HCT116 (cell line): ENCODE measurements at regions of chr2 and their contacts with region 1.

Region 1: DNA sequence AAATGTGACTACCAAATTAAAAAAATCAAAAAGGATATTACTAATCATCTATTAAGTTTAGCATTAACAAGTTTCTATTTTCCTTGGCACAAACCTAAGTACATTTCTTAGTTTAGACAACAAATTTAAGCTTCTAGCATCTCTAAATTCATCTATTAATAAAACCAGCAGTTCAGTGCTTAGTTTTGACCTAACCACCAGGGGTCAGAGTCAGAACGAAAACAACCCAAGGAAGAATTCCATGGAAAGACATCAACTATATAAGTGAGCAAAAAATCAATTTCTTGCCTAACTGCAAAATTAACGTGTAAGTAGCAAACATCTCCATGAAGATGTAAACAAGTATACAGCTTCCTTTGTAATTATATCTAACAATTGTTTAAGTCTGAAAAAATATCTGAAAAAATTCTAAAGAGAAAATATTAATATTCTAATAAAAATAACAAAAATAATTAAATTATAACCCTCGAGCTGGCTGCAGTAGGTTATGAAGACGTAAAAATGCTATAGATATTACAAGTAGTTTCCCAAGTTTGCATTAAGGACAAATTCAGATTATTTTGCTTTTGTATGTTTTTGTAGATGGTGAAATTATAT is 83.7 kb downstream of the CERKL start:
- DNase-seq: peak; percentile 54
- ATAC-seq: peak; percentile 82
- H3K4me3 ChIP-seq: no peak overlapping the region
- H3K27ac ChIP-seq: no peak overlapping the region
- H3K4me1 ChIP-seq: peaks cover 0 to 5% of the 10 kb centered on the region in 2 experiments; a peak in 2 of 4 replicates
- H3K27me3 ChIP-seq: no peaks in the 10 kb centered on the region
- CTCF ChIP-seq: peak; percentile 49 to 74 (median 68); a peak in 4 of 6 replicates
- POLR2A ChIP-seq: no peak
- RAD21 ChIP-seq: peak; percentile 84

Region 2: DNA sequence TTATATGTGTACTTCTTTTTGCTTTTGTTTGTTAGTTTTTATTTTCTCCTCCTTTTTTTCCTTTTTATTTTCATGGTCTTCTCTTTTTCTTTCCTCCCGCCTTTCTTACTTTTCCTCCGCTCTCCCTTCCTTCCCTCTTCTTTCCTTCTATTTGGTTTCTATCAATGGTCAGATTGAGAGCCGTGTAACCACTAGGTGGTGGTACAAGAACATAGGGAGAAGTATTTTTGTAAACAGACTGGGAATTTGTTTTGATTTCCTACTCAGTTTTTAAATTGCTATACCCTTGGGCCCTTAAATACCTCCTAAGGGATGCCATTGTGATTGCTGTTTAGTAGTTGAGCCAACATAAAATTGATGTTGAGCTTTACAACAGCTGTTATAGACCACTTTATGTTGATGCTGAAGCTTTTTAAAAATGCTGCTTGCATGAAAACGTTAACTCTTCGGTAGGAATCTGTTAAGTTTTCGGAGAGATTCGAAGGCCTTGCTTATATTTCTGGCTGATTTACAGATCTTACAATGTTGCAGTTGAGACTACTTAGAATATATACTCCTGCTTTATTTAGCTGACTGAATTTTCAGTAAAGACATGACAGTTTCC is 468.6 kb before region 1 on chr2:
- CTCF ChIA-PET with region 1: interaction called, 3 read pairs
- POLR2A ChIA-PET with region 1: no interaction called
- RAD21 ChIA-PET with region 1: no interaction called
- intact Hi-C with region 1: loop called (anchors 1 kb)
- DNase-seq: peak; percentile 51
- ATAC-seq: peak; percentile 57
- H3K4me3 ChIP-seq: no peak overlapping the region
- H3K27ac ChIP-seq: no peak overlapping the region
- H3K4me1 ChIP-seq: peaks cover 28 to 47% of the 10 kb centered on the region in 2 experiments
- H3K27me3 ChIP-seq: no peaks in the 10 kb centered on the region
- CTCF ChIP-seq: peak; percentile 70 to 89 (median 82); a peak in 5 of 6 replicates
- POLR2A ChIP-seq: no peak
- RAD21 ChIP-seq: peak; percentile 92

Region 3: DNA sequence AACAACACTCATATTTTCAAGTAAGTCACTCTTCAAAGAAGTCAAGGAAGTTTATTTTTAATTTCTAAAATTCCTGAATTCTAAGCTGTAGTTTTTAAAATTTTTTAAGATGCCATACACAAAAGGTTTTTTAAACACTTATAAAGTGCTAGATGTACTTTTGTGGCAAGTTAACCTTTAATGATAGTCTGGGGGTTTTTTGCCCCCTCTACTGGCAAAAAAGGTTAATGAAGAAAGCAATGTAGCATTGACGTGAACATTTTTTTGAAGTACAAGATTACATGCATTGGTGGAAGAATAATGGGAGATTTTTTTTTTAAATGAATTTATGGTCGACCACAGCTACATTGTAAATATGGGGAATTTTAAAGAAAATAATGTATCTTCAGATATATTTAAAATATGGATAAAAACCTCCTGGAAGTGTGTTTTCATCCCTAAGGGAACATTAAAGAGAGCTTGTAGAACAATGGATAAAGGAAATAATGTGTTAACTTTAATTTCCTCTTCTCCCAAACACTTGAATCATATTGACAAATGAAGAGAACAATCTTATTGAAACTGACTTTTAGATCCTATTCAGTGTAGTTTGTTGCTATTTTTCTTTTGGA is 330.9 kb after region 1 on chr2:
- CTCF ChIA-PET with region 1: no interaction called
- POLR2A ChIA-PET with region 1: no interaction called
- RAD21 ChIA-PET with region 1: no interaction called
- intact Hi-C with region 1: loop called (anchors 5 kb)
- DNase-seq: no peak
- ATAC-seq: no peak
- H3K4me3 ChIP-seq: no peak overlapping the region
- H3K27ac ChIP-seq: peak overlapping the region; percentile 99
- H3K4me1 ChIP-seq: peaks cover 71 to 98% of the 10 kb centered on the region in 2 experiments
- H3K27me3 ChIP-seq: no peaks in the 10 kb centered on the region
- CTCF ChIP-seq: peak; percentile 24 to 59 (median 30); a peak in 3 of 6 replicates
- POLR2A ChIP-seq: no peak
- RAD21 ChIP-seq: peak; percentile 48